ENCODE measurements at regions of chr3 and their contacts with region 1.

Region 1: DNA sequence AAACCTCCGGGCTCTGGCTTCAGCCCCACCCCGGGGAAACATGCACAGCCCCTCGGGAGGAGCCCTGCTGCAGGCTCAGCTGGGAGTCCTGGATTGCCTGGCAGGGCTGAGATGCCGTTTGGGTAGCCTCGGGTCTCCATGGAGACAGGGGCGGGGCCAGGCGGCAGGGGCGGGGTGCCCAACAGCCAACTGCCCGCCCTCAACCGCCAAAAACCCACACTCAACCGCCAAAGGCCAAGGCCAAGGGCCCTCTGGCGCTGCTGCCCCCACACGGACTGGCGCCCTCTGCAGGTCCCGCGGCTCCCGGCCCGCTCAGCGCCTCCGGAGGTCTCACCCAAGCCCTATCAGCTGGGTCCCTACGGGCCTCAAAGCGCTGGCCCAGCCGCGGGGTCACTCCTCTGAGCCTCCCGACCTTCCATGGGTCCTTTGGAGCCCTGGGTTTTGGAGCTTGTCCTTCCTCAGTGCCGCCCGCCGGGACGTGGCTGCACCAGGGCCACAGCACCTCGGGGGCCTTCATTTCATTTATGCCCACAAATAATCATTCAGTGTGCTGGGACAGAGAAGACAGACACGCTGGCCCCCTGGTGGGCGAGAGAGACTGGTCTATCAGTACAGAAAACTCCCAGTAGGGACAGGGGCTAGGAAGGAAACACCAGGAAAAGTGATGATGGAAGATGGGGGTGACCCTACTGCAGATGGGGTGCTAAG is 33.5 kb upstream of the ACAD9 start:
- DNase-seq: peak; percentile 58 to 85 (median 79)
- ATAC-seq: peak; percentile 82
- H3K4me3 ChIP-seq: peak overlapping the region; percentile 51 to 74
- H3K4me3 Mint-ChIP-seq: peak overlapping the region; percentile 80
- H3K27ac ChIP-seq: peak overlapping the region; percentile 17 to 45
- H3K27ac Mint-ChIP-seq: peak overlapping the region; percentile 78
- H3K4me1 ChIP-seq: peaks cover 19% of the 10 kb centered on the region
- H3K4me1 Mint-ChIP-seq: peaks cover 9% of the 10 kb centered on the region
- H3K27me3 ChIP-seq: no peaks in the 10 kb centered on the region
- H3K27me3 Mint-ChIP-seq: no peaks in the 10 kb centered on the region
- CTCF ChIP-seq: peak; percentile 75

Region 2: GRCh38 chr3:128787256-128788240 is 58.4 kb before region 1 on chr3:
- CTCF ChIA-PET with region 1: interaction called, 21 read pairs
- POLR2A ChIA-PET with region 1: no interaction called
- intact Hi-C with region 1: loop called (anchors 1 kb)
- DNase-seq: peak in 5 of 9 experiments; percentile 34 to 70 (median 62)
- ATAC-seq: peak; percentile 60
- H3K4me3 ChIP-seq: peak overlapping the region in 1 of 2 experiments; percentile 36
- H3K4me3 Mint-ChIP-seq: peak overlapping the region; percentile 70
- H3K27ac ChIP-seq: peak overlapping the region; percentile 49 to 83
- H3K27ac Mint-ChIP-seq: peak overlapping the region; percentile 91
- H3K4me1 ChIP-seq: peaks cover 77% of the 10 kb centered on the region
- H3K4me1 Mint-ChIP-seq: peaks cover 88% of the 10 kb centered on the region
- H3K27me3 ChIP-seq: no peaks in the 10 kb centered on the region
- H3K27me3 Mint-ChIP-seq: no peaks in the 10 kb centered on the region
- CTCF ChIP-seq: peak; percentile 51

Region 3: DNA sequence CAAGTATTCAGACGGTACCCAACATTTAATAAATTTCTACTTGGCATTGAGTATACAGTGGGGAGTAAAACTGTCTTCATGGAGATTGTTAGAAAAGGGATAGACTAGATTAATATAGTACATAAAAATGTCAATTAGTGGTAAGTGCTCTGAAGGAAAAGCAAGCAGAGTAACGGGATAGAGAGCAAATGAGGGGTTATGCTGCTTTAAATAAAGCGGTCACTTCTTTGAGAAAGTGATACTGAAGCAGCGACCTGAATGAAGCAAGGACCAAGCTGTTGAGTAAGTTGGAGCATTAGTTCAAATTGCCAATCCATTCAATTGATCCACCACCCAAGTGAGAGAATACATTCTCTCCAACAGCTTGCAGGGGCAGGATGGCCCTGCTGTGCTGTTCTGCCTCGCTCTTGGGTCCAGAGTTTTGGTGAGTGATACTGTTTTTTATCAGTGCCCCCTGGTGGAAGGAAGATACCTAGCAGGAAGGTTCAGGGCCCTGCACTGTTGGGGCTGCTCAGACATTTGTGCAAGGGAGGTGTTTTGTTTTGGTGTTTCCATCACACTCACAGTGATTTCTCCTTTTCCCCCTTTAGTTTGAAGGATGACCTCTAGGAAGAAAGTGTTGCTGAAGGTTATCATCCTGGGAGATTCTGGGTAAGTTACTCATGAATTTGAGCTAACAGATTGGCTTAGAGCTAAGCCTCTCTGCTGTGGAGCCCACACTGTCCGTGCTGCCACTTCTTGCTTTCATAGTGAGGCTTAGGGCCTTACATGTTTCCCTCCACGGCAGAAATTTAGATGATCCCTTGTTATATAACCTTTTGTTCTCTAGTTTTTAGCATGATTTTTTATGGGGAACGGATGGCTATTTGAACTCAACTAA is 50.9 kb before region 1 on chr3:
- CTCF ChIA-PET with region 1: interaction called, 25 read pairs
- POLR2A ChIA-PET with region 1: no interaction called
- intact Hi-C with region 1: loop called (anchors 1 to 5 kb)
- DNase-seq: peak; percentile 32 to 85 (median 64)
- ATAC-seq: peak; percentile 99
- H3K4me3 ChIP-seq: no peak overlapping the region
- H3K4me3 Mint-ChIP-seq: peak overlapping the region; percentile 9
- H3K27ac ChIP-seq: peak overlapping the region in 1 of 2 experiments; percentile 17
- H3K27ac Mint-ChIP-seq: peak overlapping the region; percentile 80
- H3K4me1 ChIP-seq: peaks cover 44% of the 10 kb centered on the region
- H3K4me1 Mint-ChIP-seq: peaks cover 55% of the 10 kb centered on the region
- H3K27me3 ChIP-seq: no peaks in the 10 kb centered on the region
- H3K27me3 Mint-ChIP-seq: no peaks in the 10 kb centered on the region
- CTCF ChIP-seq: peak; percentile 81

Region 4: GRCh38 chr3:128804017-128804810 is 41.7 kb before region 1 on chr3:
- CTCF ChIA-PET with region 1: interaction called, 12 read pairs
- POLR2A ChIA-PET with region 1: no interaction called
- intact Hi-C with region 1: loop called in 1 of 2 experiments (anchors 5 kb)
- DNase-seq: peak in 8 of 9 experiments; percentile 26 to 92 (median 56)
- ATAC-seq: peak; percentile 95
- H3K4me3 ChIP-seq: peak overlapping the region; percentile 21 to 36
- H3K4me3 Mint-ChIP-seq: peak overlapping the region; percentile 75
- H3K27ac ChIP-seq: peak overlapping the region; percentile 66 to 84
- H3K27ac Mint-ChIP-seq: peak overlapping the region; percentile 97
- H3K4me1 ChIP-seq: peaks cover 49% of the 10 kb centered on the region
- H3K4me1 Mint-ChIP-seq: peaks cover 69% of the 10 kb centered on the region
- H3K27me3 ChIP-seq: no peaks in the 10 kb centered on the region
- H3K27me3 Mint-ChIP-seq: no peaks in the 10 kb centered on the region
- CTCF ChIP-seq: no peak

Region 5: DNA sequence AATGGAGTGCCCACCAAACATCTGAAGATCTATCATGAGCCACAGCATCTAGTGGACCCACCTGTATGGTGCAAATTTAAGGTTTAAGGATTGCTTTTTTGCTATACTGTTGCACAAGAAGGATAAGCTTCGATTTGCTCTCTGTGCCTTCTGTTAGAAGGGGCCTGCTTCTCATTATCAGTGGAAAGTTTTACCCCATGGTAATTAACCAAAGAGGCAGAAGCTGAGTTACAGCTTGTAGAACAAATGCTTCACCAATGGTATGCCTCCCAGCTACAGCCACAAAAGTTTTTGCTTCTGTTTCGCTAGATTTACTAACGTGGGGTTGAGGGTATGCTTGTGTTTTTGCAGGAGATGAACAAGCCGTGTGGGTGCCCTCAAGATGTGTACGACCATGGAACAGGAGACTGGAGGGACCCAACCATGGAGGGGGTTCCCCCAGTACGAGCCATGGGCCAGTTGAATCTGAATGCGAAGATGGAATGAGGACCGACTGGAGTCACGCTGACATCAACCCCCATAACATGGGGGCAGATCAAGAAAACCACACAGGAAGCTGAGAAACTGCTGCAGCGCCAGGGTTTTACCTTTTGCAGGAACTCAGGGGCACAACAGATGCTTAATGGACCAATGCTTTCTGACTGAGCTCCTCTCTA is 77.0 kb after region 1 on chr3:
- CTCF ChIA-PET with region 1: interaction called, 14 read pairs
- POLR2A ChIA-PET with region 1: interaction called, 5 read pairs
- intact Hi-C with region 1: no loop called
- DNase-seq: peak; percentile 16 to 83 (median 58)
- ATAC-seq: peak; percentile 85
- H3K4me3 ChIP-seq: peak overlapping the region; percentile 34 to 37
- H3K4me3 Mint-ChIP-seq: peak overlapping the region; percentile 84
- H3K27ac ChIP-seq: peak overlapping the region; percentile 34 to 52
- H3K27ac Mint-ChIP-seq: peak overlapping the region; percentile 90
- H3K4me1 ChIP-seq: peaks cover 19% of the 10 kb centered on the region
- H3K4me1 Mint-ChIP-seq: peaks cover 36% of the 10 kb centered on the region
- H3K27me3 ChIP-seq: no peaks in the 10 kb centered on the region
- H3K27me3 Mint-ChIP-seq: no peaks in the 10 kb centered on the region
- CTCF ChIP-seq: no peak

Region 6: GRCh38 chr3:129058441-129059200 is 212.7 kb after region 1 on chr3:
- CTCF ChIA-PET with region 1: no interaction called
- POLR2A ChIA-PET with region 1: no interaction called
- intact Hi-C with region 1: no loop called
- DNase-seq: peak in 3 of 9 experiments; percentile 29 to 59 (median 38)
- ATAC-seq: peak; percentile 68
- H3K4me3 ChIP-seq: no peak overlapping the region
- H3K4me3 Mint-ChIP-seq: no peak overlapping the region
- H3K27ac ChIP-seq: no peak overlapping the region
- H3K27ac Mint-ChIP-seq: no peak overlapping the region
- H3K4me1 ChIP-seq: peaks cover 3% of the 10 kb centered on the region
- H3K4me1 Mint-ChIP-seq: peaks cover 9% of the 10 kb centered on the region
- H3K27me3 ChIP-seq: no peaks in the 10 kb centered on the region
- H3K27me3 Mint-ChIP-seq: no peaks in the 10 kb centered on the region
- CTCF ChIP-seq: no peak

Measured in CD8-positive, alpha-beta T cell (primary cell).